Activated CD4-positive, alpha-beta memory T cell treated with anti-CD3 and anti-CD28 coated beads for 36 hours (primary cell): ENCODE measurements at regions of chr11 and their contacts with region 1.

Region 1: DNA sequence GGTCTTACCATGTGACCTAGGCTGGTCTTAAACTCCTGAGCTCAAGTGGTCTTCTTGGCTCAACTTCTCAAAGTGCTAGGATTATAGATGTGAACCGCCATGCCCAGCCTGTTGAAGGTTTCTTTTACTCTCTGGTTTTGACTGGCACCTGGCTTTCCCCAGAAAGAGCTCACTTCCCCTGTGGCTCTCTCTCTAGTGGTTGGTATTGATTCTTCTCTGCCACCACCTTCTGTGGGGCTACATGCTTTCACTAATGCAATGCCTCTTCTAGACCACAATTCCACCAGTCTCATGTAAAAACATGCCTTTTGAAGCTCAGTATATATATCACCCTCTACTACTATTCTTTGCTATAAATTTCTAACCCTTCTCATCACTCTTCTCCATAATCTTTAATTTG is 67.2 kb downstream of the CCDC83 start:
- DNase-seq: peak; percentile 29
- H3K4me3 Mint-ChIP-seq: no peak overlapping the region
- H3K27ac Mint-ChIP-seq: no peak overlapping the region
- H3K4me1 Mint-ChIP-seq: peaks cover 3% of the 10 kb centered on the region
- H3K27me3 Mint-ChIP-seq: peaks cover 25% of the 10 kb centered on the region

Region 2: GRCh38 chr11:85874265-85874664 is 48.1 kb before region 1 on chr11:
- CTCF ChIA-PET with region 1: no interaction called
- POLR2A ChIA-PET with region 1: no interaction called
- intact Hi-C with region 1: loop called (anchors 5 kb)
- DNase-seq: no peak
- H3K4me3 Mint-ChIP-seq: no peak overlapping the region
- H3K27ac Mint-ChIP-seq: no peak overlapping the region
- H3K4me1 Mint-ChIP-seq: peaks cover 17% of the 10 kb centered on the region
- H3K27me3 Mint-ChIP-seq: peaks cover 5% of the 10 kb centered on the region

Region 3: DNA sequence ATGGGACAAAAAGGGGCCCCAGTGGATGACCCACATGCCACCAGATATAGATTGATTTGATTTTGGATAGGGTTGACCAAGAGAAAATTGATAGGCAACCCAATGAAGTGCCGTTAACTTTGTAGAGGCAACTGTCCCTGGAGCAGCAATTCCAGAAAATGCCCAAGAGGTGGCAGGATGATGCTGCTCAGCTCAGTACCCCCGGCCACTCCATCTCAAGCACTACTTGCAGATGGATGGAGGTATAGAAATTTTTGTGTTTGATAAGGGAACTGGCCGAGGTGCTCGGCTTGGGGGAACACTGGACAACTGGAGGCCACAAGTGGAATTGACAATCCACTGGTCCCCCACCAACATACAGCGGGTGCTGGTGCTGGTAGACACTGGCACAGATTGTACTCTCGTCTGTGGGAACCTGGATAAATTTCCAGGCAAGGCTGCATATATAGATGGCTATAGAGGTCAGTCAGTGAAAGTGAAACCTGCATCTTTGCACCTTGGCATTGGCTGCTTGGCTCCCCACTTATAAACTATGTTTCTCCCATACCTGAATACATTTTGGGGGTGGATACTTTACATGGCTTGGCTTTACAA is 19.1 kb after region 1 on chr11:
- CTCF ChIA-PET with region 1: no interaction called
- POLR2A ChIA-PET with region 1: no interaction called
- intact Hi-C with region 1: no loop called
- DNase-seq: peak; percentile 69
- H3K4me3 Mint-ChIP-seq: no peak overlapping the region
- H3K27ac Mint-ChIP-seq: no peak overlapping the region
- H3K4me1 Mint-ChIP-seq: peaks cover 24% of the 10 kb centered on the region
- H3K27me3 Mint-ChIP-seq: no peaks in the 10 kb centered on the region